Activated CD8-positive, alpha-beta T cell treated with anti-CD3 and anti-CD28 coated beads, Interleukin-2, amount 10 ng/mL, durations not matched to agents 7 days and 5 days (primary cell): ENCODE measurements at regions of chr17 and their contacts with region 1.

Region 1: GRCh38 chr17:57892146-57892828 is 42.4 kb upstream of the MRPS23 start:
- DNase-seq: peak; percentile 82
- ATAC-seq: peak; percentile 93
- H3K4me3 Mint-ChIP-seq: no peak overlapping the region
- H3K27ac Mint-ChIP-seq: no peak overlapping the region
- H3K4me1 Mint-ChIP-seq: peaks cover 10% of the 10 kb centered on the region
- H3K27me3 Mint-ChIP-seq: peaks cover 7% of the 10 kb centered on the region

Region 2: DNA sequence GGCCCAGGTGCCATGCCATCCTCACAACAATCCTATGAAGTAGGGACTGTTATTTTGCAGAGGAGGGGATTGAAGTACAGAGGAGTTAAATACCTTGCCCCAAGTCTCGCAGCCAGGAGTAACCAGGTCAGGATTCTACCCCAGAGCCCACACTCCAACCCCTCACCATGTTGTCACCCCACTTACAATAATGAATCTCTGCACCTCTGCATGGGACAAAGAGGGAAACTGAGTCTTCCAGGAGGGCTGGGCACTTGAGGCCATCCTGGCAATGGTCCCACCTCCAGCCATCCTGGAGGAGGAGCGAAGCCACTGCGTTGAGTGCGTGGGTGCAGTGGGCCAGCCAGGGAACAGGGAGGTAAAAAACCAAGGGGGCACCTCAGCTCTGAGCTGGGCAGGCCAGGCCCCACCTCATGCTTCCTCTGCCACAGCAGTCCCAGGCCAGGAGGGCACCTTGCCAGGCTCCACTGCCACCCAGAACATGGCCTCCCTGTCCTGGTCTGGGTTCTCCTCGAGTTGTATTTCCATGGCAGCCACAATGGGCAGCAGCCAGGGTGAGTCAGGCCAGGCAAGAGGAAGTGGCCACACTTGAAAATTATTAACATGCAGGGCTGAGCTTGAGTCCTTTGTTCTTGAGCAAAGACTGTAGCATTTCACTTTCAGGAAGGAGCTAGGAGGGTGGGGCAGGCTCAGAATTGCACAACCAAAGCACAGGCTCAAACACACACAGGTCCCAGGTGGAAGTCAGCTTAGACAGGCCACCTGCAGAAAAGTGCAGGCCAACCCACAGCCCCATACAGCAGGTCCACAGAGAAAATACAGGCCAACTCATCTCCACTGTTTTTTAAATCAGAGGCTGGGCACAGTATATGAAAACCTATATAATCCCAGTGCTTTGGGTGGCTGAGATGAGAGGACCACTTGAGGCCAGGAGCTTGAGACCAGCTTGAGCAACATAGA is 10.8 kb after region 1 on chr17:
- CTCF ChIA-PET with region 1: interaction called, 10 read pairs
- POLR2A ChIA-PET with region 1: interaction called, 3 read pairs
- DNase-seq: no peak
- ATAC-seq: peak; percentile 31
- H3K4me3 Mint-ChIP-seq: no peak overlapping the region
- H3K27ac Mint-ChIP-seq: peak overlapping the region; percentile 51
- H3K4me1 Mint-ChIP-seq: peaks cover 37% of the 10 kb centered on the region
- H3K27me3 Mint-ChIP-seq: peaks cover 4% of the 10 kb centered on the region